ENCODE measurements at regions of chr22 and their contacts with region 1.

Region 1: GRCh38 chr22:36445158-36445668 is 36.2 kb downstream of the TXN2 start:
- DNase-seq: peak; percentile 90
- H3K4me3 ChIP-seq: no peak overlapping the region
- H3K27ac ChIP-seq: peak overlapping the region; percentile 55 to 71 (median 64)
- H3K4me1 ChIP-seq: peaks cover 0 to 27% (median 22%) of the 10 kb centered on the region in 4 donors
- H3K27me3 ChIP-seq: no peaks in the 10 kb centered on the region
- CTCF ChIP-seq: no peak
- EP300 ChIP-seq: no peak
- POLR2A ChIP-seq: no peak

Region 2: GRCh38 chr22:36395926-36396325 is 49.3 kb before region 1 on chr22:
- intact Hi-C with region 1: loop called (anchors 2 kb)
- DNase-seq: no peak
- H3K4me3 ChIP-seq: no peak overlapping the region
- H3K27ac ChIP-seq: no peak overlapping the region
- H3K4me1 ChIP-seq: peaks cover 0 to 4% (median 0%) of the 10 kb centered on the region in 4 donors
- H3K27me3 ChIP-seq: no peaks in the 10 kb centered on the region
- CTCF ChIP-seq: no peak
- EP300 ChIP-seq: no peak
- POLR2A ChIP-seq: no peak